CD14-positive monocyte (primary cell): ENCODE measurements at regions of chr1 and their contacts with region 1.

Region 1: DNA sequence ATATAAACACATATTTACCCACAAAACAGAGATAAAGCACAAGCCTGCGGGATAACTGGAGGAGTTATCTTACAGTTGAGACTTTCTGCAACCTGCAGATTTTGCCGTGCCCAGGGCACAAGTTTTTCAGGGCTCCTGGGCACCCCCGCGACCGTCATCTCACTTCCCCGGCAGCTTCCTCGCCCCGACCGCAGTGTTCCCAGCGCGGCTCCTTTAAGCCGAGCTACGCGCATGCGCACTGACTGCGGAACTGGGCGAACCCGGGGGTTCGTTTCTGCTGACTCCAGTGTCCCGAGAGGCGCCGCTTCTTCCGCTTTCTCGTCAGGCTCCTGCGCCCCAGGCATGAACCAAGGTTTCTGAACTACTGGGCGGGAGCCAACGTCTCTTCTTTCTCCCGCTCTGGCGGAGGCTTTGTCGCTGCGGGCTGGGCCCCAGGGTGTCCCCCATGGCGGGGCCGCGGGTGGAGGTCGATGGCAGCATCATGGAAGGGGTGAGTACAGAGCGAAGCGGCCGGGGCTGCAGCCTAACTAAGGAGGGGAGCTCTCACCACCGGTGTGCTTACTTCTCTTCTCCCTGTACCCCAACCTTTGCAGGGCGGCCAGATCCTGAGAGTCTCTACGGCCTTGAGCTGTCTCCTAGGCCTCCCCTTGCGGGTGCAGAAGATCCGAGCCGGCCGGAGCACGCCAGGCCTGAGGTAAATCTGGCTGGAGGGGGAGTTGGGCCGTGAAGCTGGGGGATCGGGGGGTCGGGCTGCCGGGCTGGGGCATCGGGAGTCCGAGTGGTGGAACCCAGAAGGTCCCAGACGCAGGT is at the start of gene RTCA:
- DNase-seq: peak; percentile 96 to 99 (median 97)
- H3K4me3 ChIP-seq: peak within 1 kb of the TSS; percentile 64 to 96 (median 94)
- H3K4me3 Mint-ChIP-seq: peak within 1 kb of the TSS; percentile 99
- H3K27ac ChIP-seq: peak within 1 kb of the TSS; percentile 71 to 92
- H3K27ac Mint-ChIP-seq: peak within 1 kb of the TSS; percentile 89 to 96 (median 95)
- H3K4me1 ChIP-seq: peaks cover 18 to 23% of the 10 kb centered on the region in 2 donors
- H3K4me1 Mint-ChIP-seq: peaks cover 32% of the 10 kb centered on the region
- H3K27me3 ChIP-seq: no peaks in the 10 kb centered on the region
- H3K27me3 Mint-ChIP-seq: no peaks in the 10 kb centered on the region
- CTCF ChIP-seq: no peak
- polyA plus RNA-seq, gene RTCA: 11.7 to 18.3 (median 17.9) TPM

Region 2: DNA sequence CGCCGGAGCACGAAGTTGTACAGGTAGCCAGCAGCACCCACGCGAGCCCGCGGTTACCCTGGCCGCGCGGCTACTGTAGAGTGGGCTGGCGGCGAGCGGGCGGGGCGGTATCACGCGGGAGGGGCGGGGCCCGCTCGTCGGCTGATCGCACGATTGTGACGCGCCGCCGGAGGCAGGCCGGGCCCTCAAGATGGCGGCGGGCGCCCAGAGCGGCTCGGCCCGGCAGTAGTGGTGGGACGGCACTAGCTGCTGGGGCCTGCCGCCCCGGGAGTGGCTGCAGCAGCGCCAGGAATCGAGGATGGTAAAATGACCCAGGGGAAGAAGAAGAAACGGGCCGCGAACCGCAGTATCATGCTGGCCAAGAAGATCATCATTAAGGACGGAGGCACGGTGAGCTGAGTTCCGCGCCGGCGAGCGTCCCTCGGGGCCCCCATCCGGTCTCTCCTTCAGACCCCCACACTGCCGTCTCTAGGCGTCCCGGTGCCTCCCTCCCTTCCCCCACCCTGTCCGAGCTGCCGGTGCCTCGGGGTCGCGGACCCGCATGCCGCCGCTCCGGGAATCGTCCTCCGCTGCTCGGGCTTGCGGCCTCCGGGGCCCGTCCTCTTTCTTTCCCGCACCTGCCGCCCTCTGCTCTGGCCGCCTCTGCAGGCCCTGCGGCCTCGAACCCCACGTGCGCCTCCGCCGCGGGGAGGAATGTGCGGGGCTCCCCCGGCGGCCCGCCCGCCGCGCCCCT is 228.0 kb before region 1 on chr1:
- intact Hi-C with region 1: loop called in 1 of 2 experiments (anchors 5 kb)
- DNase-seq: peak; percentile 82 to 88 (median 86)
- H3K4me3 ChIP-seq: peak overlapping the region; percentile 87 to 97 (median 90)
- H3K4me3 Mint-ChIP-seq: peak overlapping the region; percentile 96 to 97
- H3K27ac ChIP-seq: peak overlapping the region; percentile 94 to 97
- H3K27ac Mint-ChIP-seq: peak overlapping the region; percentile 96 to 99 (median 98)
- H3K4me1 ChIP-seq: peaks cover 24 to 28% of the 10 kb centered on the region in 2 donors
- H3K4me1 Mint-ChIP-seq: peaks cover 36% of the 10 kb centered on the region
- H3K27me3 ChIP-seq: no peaks in the 10 kb centered on the region
- H3K27me3 Mint-ChIP-seq: peaks cover 0 to 4% (median 0%) of the 10 kb centered on the region in 3 donors
- CTCF ChIP-seq: no peak

Region 3: DNA sequence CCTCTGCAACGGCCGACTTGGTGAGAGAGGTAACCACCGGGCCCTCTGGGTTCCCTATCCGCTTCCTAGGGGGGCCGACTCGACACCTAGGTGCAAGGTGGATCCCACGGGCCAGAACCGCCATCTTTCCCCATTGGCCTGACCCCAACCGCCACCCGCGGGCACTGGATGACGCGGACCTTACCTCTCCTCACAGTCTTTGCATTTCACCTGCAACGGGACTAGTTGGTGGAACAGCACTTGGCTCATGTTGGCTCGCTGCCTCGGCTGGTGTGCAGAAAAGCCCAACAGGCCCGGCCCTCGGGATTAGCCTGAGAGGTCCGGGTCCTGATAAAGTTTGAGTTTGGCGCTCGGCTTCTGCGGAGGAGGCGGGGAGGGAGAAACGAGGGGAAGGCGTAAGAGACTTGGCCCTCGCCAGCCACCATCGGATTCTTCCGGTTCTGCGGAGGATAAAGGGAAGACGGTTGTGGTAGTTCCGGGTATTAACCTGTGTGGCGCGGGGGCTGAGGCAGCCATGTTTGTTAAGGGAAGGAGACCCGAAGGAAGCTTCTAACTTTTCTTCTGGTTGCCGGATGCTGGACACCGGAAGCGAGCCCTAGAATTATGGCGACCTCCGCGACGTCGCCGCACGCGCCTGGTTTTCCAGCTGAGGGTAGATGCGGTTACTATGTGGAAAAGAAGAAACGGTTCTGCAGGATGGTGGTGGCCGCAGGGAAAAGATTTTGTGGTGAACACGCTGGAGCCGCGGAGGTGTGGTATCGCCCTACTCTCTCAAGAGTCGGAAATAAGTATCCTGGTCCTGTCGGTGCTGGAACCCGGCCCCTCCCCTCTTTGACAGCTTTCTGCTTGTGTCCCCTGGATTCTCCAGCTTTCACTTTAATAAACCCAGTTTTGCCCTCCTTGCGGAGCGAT is 133.3 kb before region 1 on chr1 and contains the starts of genes SASS6 and TRMT13:
- intact Hi-C with region 1: loop called (anchors 5 kb)
- DNase-seq: peak; percentile 94 to 97 (median 97)
- H3K4me3 ChIP-seq: peak within 1 kb of the TSS; percentile 79 to 99 (median 94)
- H3K4me3 Mint-ChIP-seq: peak within 1 kb of the TSS; percentile 97 to 99
- H3K27ac ChIP-seq: peak within 1 kb of the TSS; percentile 37 to 85
- H3K27ac Mint-ChIP-seq: peak within 1 kb of the TSS; percentile 91 to 97 (median 94)
- H3K4me1 ChIP-seq: peaks cover 14 to 22% of the 10 kb centered on the region in 2 donors
- H3K4me1 Mint-ChIP-seq: peaks cover 21% of the 10 kb centered on the region
- H3K27me3 ChIP-seq: no peaks in the 10 kb centered on the region
- H3K27me3 Mint-ChIP-seq: no peaks in the 10 kb centered on the region
- CTCF ChIP-seq: no peak
- polyA plus RNA-seq, gene SASS6: 0.53 to 0.98 (median 0.93) TPM
- polyA plus RNA-seq, gene TRMT13: 2.2 to 8.1 (median 2.3) TPM

Region 4: GRCh38 chr1:100229681-100230443 is 36.3 kb before region 1 on chr1:
- intact Hi-C with region 1: loop called in 1 of 2 experiments (anchors 5 kb)
- DNase-seq: no peak
- H3K4me3 ChIP-seq: no peak overlapping the region
- H3K4me3 Mint-ChIP-seq: no peak overlapping the region
- H3K27ac ChIP-seq: no peak overlapping the region
- H3K27ac Mint-ChIP-seq: peak overlapping the region in 2 of 7 donors; percentile 20 to 38
- H3K4me1 ChIP-seq: no peaks in the 10 kb centered on the region
- H3K4me1 Mint-ChIP-seq: peaks cover 5% of the 10 kb centered on the region
- H3K27me3 ChIP-seq: no peaks in the 10 kb centered on the region
- H3K27me3 Mint-ChIP-seq: no peaks in the 10 kb centered on the region
- CTCF ChIP-seq: no peak

Region 5: DNA sequence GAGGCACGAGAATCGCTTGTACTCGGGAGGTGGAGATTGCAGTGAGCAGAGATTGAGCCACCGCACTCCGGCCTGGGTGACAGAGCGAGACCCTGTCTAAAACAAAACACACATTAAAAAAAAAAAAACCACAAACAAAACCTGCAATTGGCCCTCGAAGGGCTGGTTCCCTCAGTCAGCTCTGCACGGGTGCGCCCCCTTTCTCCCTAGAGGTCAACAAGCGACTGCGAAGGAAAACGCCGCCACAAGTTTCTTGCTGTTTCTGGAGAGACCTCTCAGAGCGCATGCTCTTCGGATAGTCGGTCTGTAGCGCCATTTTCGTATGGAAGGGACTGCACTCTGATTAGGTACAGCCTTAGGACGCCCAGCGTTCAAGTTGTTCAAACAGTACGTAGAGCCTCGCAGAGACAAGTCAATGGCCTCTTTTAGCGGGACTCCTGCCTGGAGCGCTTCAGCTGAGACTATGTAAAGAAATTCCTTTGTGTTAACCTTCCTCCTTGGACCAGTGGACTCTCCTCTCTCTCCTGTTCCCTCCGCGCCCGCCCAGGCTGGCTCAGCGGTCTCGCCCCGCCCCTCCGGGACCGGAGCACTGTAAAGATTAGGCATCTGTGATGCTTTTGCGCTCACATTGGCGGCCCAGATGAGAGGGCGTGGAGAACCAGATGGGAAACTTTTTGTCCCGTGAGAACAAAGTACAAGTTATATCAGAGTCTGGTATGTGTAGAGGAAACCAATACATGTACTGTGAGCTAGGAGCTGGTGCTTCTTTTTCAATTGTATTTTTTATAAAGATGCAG is 85.2 kb after region 1 on chr1:
- intact Hi-C with region 1: loop called (anchors 5 to 10 kb)
- DNase-seq: peak; percentile 71 to 80 (median 78)
- H3K4me3 ChIP-seq: peak overlapping the region; percentile 81 to 98 (median 97)
- H3K4me3 Mint-ChIP-seq: peak overlapping the region; percentile 98
- H3K27ac ChIP-seq: peak overlapping the region; percentile 76 to 91
- H3K27ac Mint-ChIP-seq: peak overlapping the region; percentile 81 to 97 (median 94)
- H3K4me1 ChIP-seq: peaks cover 25 to 41% of the 10 kb centered on the region in 2 donors
- H3K4me1 Mint-ChIP-seq: peaks cover 44% of the 10 kb centered on the region
- H3K27me3 ChIP-seq: no peaks in the 10 kb centered on the region
- H3K27me3 Mint-ChIP-seq: peaks cover 0 to 6% (median 0%) of the 10 kb centered on the region in 3 donors
- CTCF ChIP-seq: peak; percentile 41